K562 (cell line): ENCODE measurements at regions of chr6 and their contacts with region 1.

Region 1: GRCh38 chr6:12704946-12705345 is 11.6 kb upstream of the PHACTR1 start:
- DNase-seq: no peak
- ATAC-seq: no peak
- H3K4me3 ChIP-seq: no peak overlapping the region
- H3K27ac ChIP-seq: no peak overlapping the region
- H3K4me1 ChIP-seq: no peaks in the 10 kb centered on the region
- H3K27me3 ChIP-seq: no peaks in the 10 kb centered on the region
- CTCF ChIP-seq: no peak
- EP300 ChIP-seq: no peak
- POLR2A ChIP-seq: no peak
- RAD21 ChIP-seq: no peak

Region 2: DNA sequence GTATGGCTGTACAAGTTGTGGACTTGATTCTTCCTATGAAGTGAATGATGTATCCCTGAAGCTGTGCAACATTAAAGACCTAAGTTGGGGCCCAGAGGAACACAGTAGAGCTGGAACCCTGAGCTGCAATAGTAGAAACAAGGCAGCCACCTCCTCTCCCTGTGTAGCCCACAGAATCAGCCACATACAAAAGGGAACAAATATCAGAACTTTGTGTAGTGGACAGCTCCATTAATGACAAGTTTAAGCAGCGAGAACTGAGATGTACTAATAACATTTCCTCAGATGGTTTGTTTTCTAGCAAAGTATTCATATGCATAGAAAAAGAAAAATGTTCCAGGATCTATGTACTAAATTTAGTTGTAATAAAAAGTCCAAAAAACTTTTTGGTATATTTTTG is 30.8 kb after region 1 on chr6:
- CTCF ChIA-PET with region 1: no interaction called
- POLR2A ChIA-PET with region 1: no interaction called
- in situ Hi-C with region 1: loop called (anchors 5 kb)
- intact Hi-C with region 1: no loop called
- DNase-seq: no peak
- ATAC-seq: no peak
- H3K4me3 ChIP-seq: no peak overlapping the region
- H3K27ac ChIP-seq: no peak overlapping the region
- H3K4me1 ChIP-seq: no peaks in the 10 kb centered on the region
- H3K27me3 ChIP-seq: no peaks in the 10 kb centered on the region
- CTCF ChIP-seq: no peak
- EP300 ChIP-seq: no peak
- POLR2A ChIP-seq: no peak
- RAD21 ChIP-seq: no peak

Region 3: DNA sequence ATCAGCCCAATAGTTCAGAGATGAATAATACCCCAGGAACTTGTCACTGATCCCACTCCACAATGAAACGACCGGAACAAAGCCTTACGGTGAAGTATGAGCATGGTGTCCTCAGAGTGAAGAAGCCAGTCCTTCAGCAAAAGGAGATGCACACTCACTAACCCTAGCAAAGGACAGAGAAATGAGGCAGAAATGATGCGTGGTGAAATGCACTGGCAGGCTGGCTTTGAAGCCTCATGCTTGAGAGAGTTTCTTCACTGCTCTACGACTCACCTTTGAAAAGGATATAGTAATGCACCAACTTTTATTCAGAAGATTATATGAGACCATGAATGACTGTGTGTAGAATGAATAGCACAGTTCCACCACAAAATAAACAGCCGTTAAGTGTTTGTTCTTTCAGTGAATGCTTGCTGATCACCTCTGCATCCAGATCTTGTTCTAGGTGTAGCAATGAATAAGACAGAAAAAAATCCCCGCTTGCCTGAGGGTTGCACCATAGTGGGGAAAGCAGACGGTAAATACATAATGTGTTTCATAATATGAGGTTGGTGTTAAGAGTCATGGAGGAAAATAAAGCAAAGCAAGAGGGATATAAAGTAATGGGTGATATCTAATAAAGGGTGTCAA is 86.5 kb after region 1 on chr6:
- CTCF ChIA-PET with region 1: no interaction called
- POLR2A ChIA-PET with region 1: no interaction called
- in situ Hi-C with region 1: no loop called
- intact Hi-C with region 1: no loop called
- DNase-seq: no peak
- ATAC-seq: no peak
- H3K4me3 ChIP-seq: no peak overlapping the region
- H3K27ac ChIP-seq: no peak overlapping the region
- H3K4me1 ChIP-seq: no peaks in the 10 kb centered on the region
- H3K27me3 ChIP-seq: no peaks in the 10 kb centered on the region
- CTCF ChIP-seq: no peak
- EP300 ChIP-seq: no peak
- POLR2A ChIP-seq: no peak
- RAD21 ChIP-seq: no peak